OCI-LY7 (cell line): ENCODE measurements at regions of chr12 and their contacts with region 1.

Region 1: GRCh38 chr12:2845280-2845679 is 10.4 kb upstream of the NRIP2 start:
- DNase-seq: no peak
- H3K4me3 ChIP-seq: no peak overlapping the region
- H3K27ac ChIP-seq: no peak overlapping the region
- H3K4me1 ChIP-seq: no peaks in the 10 kb centered on the region
- CTCF ChIP-seq: no peak

Region 2: DNA sequence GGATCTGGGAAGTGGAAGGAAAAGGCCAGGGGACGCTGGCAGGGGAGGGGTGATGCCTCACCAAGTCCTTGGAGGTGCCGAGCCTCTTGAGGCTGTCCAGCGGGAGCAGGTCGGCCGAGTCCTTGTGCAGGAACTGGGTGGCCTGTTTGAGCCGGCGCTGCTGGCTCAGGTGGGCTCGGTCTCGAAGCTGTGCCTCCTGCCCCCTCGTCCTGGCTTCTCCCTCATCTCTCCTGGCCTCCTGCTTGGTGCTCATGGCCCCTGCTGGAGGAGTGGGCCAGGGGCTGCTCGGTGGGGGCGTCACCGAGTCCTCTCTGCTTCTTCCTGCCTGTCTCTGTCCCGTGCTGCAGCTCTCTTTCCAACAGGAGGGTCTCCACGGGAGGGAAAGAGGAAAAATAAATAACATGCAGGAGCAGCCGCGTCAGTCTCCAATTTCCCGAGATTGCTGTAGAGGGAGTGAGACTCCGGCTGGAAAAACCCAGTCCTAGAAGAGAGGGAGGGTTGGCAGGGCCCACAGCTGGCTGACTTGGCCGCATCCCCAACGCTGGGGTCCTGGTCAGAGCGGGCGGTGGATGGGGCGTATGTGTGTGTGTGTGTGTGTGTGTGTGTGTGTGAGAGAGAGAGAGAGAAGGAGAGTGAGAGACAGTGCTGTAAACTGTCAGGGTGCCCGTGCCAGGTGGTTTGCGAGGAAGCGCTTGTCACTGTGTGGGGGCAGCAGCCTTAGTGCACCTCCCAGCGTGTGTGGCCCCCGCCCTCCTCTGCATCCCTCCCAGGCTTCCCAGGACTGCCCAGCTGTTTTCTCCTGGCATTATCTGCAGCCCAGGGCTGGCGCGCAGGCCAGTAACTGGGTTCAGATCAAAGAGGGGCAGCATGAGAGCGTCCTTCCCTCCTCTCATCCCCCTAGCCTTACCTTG is 10.4 kb before region 1 on chr12 and contains the start of gene NRIP2:
- CTCF ChIA-PET with region 1: no interaction called
- POLR2A ChIA-PET with region 1: no interaction called
- intact Hi-C with region 1: no loop called
- DNase-seq: no peak
- H3K4me3 ChIP-seq: no peak within 1 kb of the TSS
- H3K27ac ChIP-seq: no peak within 1 kb of the TSS
- H3K4me1 ChIP-seq: peaks cover 8% of the 10 kb centered on the region
- CTCF ChIP-seq: no peak
- total RNA-seq, gene NRIP2: not detected in 2 replicates

Region 3: GRCh38 chr12:2944401-2945047 is 99.2 kb after region 1 on chr12:
- CTCF ChIA-PET with region 1: no interaction called
- POLR2A ChIA-PET with region 1: interaction called, 4 read pairs
- intact Hi-C with region 1: loop called (anchors 2 kb)
- DNase-seq: peak; percentile 53
- H3K4me3 ChIP-seq: no peak overlapping the region
- H3K27ac ChIP-seq: no peak overlapping the region
- H3K4me1 ChIP-seq: no peaks in the 10 kb centered on the region
- CTCF ChIP-seq: peak; percentile 87

Region 4: DNA sequence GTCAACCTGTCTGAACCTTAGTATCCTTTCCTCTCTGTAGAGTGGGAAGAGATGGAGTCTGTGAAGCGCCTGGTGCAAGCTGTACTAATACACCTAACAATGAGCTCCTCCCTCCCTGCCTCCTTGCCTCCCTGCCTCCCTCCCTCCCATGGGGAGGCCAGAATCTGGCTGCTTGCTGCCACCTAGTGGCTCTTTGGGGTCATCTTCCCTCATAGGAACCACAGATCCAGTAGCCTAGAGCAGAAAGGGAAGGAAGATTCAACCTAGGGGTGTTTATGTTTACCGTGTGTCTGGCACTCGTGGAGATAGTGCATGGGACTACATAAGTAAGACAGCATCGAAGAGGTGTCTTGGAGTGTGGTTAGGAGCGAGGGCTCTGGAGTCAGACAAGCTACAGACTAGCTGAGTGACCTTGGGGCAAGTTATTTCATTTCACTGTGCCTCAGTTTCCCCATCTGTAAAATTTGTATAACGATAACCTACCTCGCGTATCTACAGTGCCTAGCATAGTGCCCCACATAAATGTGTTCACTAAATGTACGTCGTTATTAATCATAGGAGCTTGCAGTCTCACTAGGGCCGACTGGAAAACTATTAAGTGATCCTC is 196.4 kb after region 1 on chr12:
- CTCF ChIA-PET with region 1: no interaction called
- POLR2A ChIA-PET with region 1: no interaction called
- intact Hi-C with region 1: loop called (anchors 5 kb)
- DNase-seq: peak; percentile 86
- H3K4me3 ChIP-seq: peak overlapping the region; percentile 18
- H3K27ac ChIP-seq: no peak overlapping the region
- H3K4me1 ChIP-seq: peaks cover 16% of the 10 kb centered on the region
- CTCF ChIP-seq: peak; percentile 75